ENCODE measurements at regions of chr1 and their contacts with region 1.

Region 1: GRCh38 chr1:6489799-6490180 is 1.7 kb downstream of the PLEKHG5 start:
- DNase-seq: peak; percentile 80
- ATAC-seq: peak; percentile 70

Region 2: DNA sequence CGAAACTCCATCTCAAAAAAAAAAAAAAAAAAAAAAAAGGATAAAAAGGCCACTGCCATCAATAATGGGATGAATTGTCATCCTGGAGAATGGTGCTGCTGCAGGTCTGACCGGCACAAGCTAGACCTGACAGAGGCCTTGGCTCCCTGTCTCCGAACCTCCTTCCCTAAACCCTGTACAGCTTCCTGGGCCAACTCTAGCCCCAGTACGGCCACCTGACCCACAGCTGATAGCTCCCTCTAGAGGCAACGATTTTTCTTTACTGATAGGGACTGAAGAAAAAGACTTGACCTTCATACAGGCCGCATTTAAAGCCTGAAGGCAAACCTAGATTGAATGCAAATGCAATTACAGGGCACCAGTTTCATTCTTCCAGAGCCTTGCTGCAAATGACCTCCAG is 33.8 kb after region 1 on chr1:
- intact Hi-C with region 1: loop called (anchors 5 kb)
- DNase-seq: no peak
- ATAC-seq: peak; percentile 69

Region 3: GRCh38 chr1:6646499-6647148 is 156.8 kb after region 1 on chr1:
- intact Hi-C with region 1: loop called (anchors 5 kb)
- DNase-seq: no peak
- ATAC-seq: peak; percentile 65